Caco-2 (cell line): ENCODE measurements at regions of chr12 and their contacts with region 1.

Region 1: DNA sequence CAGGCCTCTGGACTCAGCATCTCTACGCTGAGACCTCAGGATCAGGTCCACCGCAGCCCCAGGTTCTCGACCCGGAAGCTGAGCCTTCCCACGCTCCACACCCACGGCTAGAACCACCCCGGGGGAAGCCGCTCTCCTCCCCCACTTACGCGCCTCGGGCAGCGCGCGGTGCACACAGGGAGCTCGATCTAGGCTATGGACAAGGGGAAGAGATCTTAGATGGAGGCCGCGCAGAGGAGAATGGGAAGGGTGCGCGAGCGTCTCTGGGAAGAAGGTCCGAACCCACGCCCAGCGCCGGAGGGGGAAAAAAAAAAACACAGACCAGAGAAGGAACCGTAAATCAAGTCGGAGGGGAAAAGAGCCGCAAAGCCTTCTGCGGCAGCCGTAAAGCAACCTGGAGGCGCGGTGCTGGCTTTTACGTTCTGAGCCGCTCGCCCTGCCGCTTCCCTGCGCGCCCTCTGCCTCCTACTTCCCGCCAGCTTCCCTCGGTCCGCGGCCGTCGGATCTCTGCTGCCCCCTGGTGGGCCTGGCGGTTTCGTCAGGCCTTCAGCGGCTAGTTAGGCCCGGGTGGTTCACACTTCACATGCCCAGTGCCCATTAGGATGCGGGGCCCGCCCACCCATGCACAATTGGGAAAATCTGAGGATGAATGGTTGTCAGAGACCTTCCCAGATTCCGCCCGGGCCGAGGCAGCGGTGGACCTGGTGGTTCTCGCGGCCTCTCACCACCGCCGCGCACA is at the start of gene RAD52:
- DNase-seq: peak; percentile 99 to 100
- H3K4me3 ChIP-seq: peak within 1 kb of the TSS; percentile 69
- H3K4me3 Mint-ChIP-seq: peak within 1 kb of the TSS; percentile 98
- H3K27ac Mint-ChIP-seq: peak within 1 kb of the TSS; percentile 99
- H3K4me1 ChIP-seq: peaks cover 27% of the 10 kb centered on the region
- H3K4me1 Mint-ChIP-seq: peaks cover 32% of the 10 kb centered on the region
- H3K27me3 ChIP-seq: no peaks in the 10 kb centered on the region
- H3K27me3 Mint-ChIP-seq: no peaks in the 10 kb centered on the region
- CTCF ChIP-seq: peak; percentile 97 to 99
- total RNA-seq, gene RAD52: 53.8 and 53.9 TPM in 2 replicates

Region 2: GRCh38 chr12:575948-576612 is 373.5 kb before region 1 on chr12:
- CTCF ChIA-PET with region 1: interaction called, 17 read pairs
- POLR2A ChIA-PET with region 1: interaction called, 12 read pairs
- intact Hi-C with region 1: loop called (anchors 1 kb)
- DNase-seq: peak; percentile 86 to 96
- H3K4me3 ChIP-seq: no peak overlapping the region
- H3K4me3 Mint-ChIP-seq: peak overlapping the region; percentile 55
- H3K27ac Mint-ChIP-seq: peak overlapping the region; percentile 67
- H3K4me1 ChIP-seq: peaks cover 52% of the 10 kb centered on the region
- H3K4me1 Mint-ChIP-seq: peaks cover 36% of the 10 kb centered on the region
- H3K27me3 ChIP-seq: no peaks in the 10 kb centered on the region
- H3K27me3 Mint-ChIP-seq: no peaks in the 10 kb centered on the region
- CTCF ChIP-seq: peak; percentile 96 to 100

Region 3: DNA sequence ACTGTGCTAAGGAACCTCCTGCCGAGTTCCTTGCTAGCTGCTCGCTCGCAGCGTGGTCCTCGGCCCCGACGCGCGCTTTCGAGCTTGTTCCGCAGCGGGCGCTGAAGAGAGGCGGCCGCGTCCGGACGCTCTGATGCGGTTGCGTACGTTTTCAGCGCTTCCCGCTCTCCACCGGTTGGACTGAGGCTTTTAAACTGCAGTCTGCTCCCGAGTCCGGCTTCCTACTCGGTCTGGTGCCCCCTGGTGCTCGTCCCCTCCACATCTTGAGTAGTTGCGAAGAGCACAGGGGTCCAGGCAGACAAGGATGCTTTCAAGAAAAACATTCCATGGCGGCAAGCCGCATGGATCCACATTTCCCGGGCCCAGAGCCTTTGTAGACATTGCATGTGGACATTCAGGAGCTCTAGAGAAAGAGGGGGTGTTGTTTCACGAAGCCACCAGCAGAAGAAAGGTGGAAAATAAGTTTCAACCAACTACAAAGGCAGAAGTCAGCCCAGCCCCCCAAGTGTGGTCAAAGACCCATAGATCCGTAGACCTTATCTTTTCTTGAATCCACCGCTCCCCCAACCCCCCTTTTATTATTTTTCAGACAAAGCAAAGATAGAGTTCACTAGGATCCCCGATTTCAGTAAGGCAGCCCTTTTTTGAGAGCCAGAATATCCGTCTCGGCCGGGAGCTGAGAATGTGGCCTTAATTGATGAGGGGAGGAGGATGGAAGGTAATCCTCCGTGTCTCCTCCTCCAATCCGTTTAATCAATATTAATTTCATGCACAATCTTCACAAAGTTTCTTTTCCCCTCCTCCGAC is 198.2 kb before region 1 on chr12:
- CTCF ChIA-PET with region 1: interaction called, 10 read pairs
- POLR2A ChIA-PET with region 1: interaction called, 4 read pairs
- intact Hi-C with region 1: loop called (anchors 1 kb)
- DNase-seq: peak; percentile 98
- H3K4me3 ChIP-seq: peak overlapping the region; percentile 42
- H3K4me3 Mint-ChIP-seq: no peak overlapping the region
- H3K27ac Mint-ChIP-seq: no peak overlapping the region
- H3K4me1 ChIP-seq: peaks cover 14% of the 10 kb centered on the region
- H3K4me1 Mint-ChIP-seq: peaks cover 20% of the 10 kb centered on the region
- H3K27me3 ChIP-seq: no peaks in the 10 kb centered on the region
- H3K27me3 Mint-ChIP-seq: no peaks in the 10 kb centered on the region
- CTCF ChIP-seq: peak; percentile 88 to 95

Region 4: DNA sequence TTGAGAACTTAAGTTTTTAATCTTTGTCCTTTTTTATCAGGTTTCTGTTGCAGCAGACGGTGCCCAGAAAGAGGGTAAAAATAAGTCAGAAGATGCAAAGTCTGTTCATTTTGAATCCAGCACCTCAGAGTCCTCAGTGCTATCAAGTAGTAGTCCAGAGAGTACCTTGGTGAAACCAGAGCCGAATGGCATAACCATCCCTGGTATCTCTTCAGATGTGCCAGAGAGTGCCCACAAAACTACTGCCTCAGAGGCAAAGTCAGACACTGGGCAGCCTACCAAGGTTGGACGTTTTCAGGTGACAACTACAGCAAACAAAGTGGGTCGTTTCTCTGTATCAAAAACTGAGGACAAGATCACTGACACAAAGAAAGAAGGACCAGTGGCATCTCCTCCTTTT is 53.6 kb before region 1 on chr12:
- CTCF ChIA-PET with region 1: interaction called, 5 read pairs
- POLR2A ChIA-PET with region 1: interaction called, 12 read pairs
- intact Hi-C with region 1: no loop called
- DNase-seq: no peak
- H3K4me3 ChIP-seq: no peak overlapping the region
- H3K4me3 Mint-ChIP-seq: no peak overlapping the region
- H3K27ac Mint-ChIP-seq: no peak overlapping the region
- H3K4me1 ChIP-seq: no peaks in the 10 kb centered on the region
- H3K4me1 Mint-ChIP-seq: no peaks in the 10 kb centered on the region
- H3K27me3 ChIP-seq: no peaks in the 10 kb centered on the region
- H3K27me3 Mint-ChIP-seq: no peaks in the 10 kb centered on the region
- CTCF ChIP-seq: no peak

Region 5: DNA sequence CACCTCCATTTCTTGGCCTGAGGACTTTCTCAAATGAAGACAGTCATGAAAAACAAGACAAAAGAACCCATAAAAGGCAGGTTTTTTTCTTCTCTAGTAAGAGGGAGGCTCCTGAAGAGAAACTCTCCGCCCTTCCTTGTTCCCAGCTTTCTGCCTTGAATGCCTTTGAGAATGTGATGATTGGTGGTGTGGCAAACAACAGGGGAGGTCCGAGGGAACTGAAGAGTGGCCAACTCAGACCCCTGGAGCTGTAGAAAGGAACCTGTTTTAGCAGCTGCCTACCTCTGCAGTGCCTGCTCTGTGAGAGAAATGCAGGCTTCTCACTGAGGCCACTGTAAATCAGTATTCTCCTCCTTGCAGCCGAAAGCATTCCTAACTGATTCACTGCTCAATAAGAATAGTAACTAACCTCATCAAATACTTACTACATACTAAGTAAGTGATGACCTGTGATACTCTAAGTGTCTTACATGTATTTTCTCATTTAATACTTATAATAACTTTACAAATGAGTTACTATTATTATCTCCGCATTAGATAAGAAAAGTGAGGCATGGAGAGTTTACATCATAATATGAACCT is 24.8 kb after region 1 on chr12:
- CTCF ChIA-PET with region 1: interaction called, 10 read pairs
- POLR2A ChIA-PET with region 1: no interaction called
- intact Hi-C with region 1: loop called (anchors 2 kb)
- DNase-seq: no peak
- H3K4me3 ChIP-seq: no peak overlapping the region
- H3K4me3 Mint-ChIP-seq: no peak overlapping the region
- H3K27ac Mint-ChIP-seq: no peak overlapping the region
- H3K4me1 ChIP-seq: no peaks in the 10 kb centered on the region
- H3K4me1 Mint-ChIP-seq: no peaks in the 10 kb centered on the region
- H3K27me3 ChIP-seq: no peaks in the 10 kb centered on the region
- H3K27me3 Mint-ChIP-seq: no peaks in the 10 kb centered on the region
- CTCF ChIP-seq: no peak

Region 6: GRCh38 chr12:1093166-1093751 is 143.6 kb after region 1 on chr12:
- CTCF ChIA-PET with region 1: interaction called, 71 read pairs
- POLR2A ChIA-PET with region 1: interaction called, 9 read pairs
- intact Hi-C with region 1: loop called (anchors 5 kb)
- DNase-seq: peak in 1 of 2 experiments; percentile 78
- H3K4me3 ChIP-seq: no peak overlapping the region
- H3K4me3 Mint-ChIP-seq: no peak overlapping the region
- H3K27ac Mint-ChIP-seq: no peak overlapping the region
- H3K4me1 ChIP-seq: peaks cover 6% of the 10 kb centered on the region; the same call in 1 of the 2 replicates
- H3K4me1 Mint-ChIP-seq: peaks cover 17% of the 10 kb centered on the region
- H3K27me3 ChIP-seq: no peaks in the 10 kb centered on the region
- H3K27me3 Mint-ChIP-seq: no peaks in the 10 kb centered on the region
- CTCF ChIP-seq: peak; percentile 84 to 88